HepG2 (cell line): ENCODE measurements at regions of chr1 and their contacts with region 1.

Region 1: GRCh38 chr1:27235827-27236226 is 1.4 kb downstream of the WDTC1 start:
- DNase-seq: no peak
- ATAC-seq: no peak
- H3K4me3 ChIP-seq: peak overlapping the region; percentile 51 to 85 (median 77)
- H3K27ac ChIP-seq: no peak overlapping the region
- H3K4me1 ChIP-seq: peaks cover 20% of the 10 kb centered on the region
- H3K27me3 ChIP-seq: no peaks in the 10 kb centered on the region
- CTCF ChIP-seq: no peak
- EP300 ChIP-seq: no peak
- POLR2A ChIP-seq: no peak
- RAD21 ChIP-seq: no peak

Region 2: DNA sequence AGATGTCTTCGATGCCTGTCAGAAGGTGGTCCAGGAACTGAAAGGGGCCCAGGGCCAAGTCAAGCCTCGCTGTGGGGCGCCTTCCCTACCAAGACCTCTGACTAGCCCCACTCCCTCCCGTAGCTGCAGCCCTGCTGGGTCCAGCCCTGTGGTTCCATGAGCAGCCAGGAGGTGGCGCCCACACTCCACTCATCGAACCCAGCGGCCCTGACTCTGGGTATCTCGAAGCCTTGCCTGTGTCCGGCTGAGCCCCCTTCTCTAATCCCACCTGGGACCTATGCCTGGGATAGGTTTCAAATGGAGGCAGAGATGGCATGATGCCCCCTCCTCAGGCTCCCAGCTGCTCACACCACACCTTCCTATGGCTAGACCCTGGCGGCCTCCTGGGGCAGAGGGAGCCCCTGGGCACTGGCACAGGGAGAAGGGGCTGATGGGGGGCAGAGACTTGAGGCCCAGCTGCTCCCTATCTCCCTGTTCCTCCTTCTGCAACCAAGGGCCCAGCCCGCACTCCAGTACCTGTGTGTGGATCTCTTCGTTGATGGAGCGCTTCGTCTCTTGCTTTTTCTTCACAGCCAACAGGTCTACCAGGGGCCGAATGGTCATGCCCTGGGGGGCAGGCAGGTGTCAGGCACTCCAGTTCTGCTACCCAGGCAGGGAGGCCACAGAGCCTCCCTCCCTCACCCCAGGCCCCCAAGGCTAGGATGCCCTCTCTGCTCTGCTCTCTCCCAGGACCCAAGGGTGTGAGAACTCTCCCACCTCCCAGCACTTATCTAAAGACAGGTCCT is 132.9 kb before region 1 on chr1:
- CTCF ChIA-PET with region 1: no interaction called
- POLR2A ChIA-PET with region 1: no interaction called
- in situ Hi-C with region 1: no loop called
- intact Hi-C with region 1: loop called (anchors 1 kb)
- DNase-seq: peak; percentile 39
- ATAC-seq: peak; percentile 76
- H3K4me3 ChIP-seq: no peak overlapping the region
- H3K27ac ChIP-seq: no peak overlapping the region
- H3K4me1 ChIP-seq: peaks cover 25% of the 10 kb centered on the region
- H3K27me3 ChIP-seq: no peaks in the 10 kb centered on the region; a peak in 1 of 5 replicates
- CTCF ChIP-seq: peak; percentile 98
- EP300 ChIP-seq: no peak
- POLR2A ChIP-seq: no peak
- RAD21 ChIP-seq: peak; percentile 95

Region 3: DNA sequence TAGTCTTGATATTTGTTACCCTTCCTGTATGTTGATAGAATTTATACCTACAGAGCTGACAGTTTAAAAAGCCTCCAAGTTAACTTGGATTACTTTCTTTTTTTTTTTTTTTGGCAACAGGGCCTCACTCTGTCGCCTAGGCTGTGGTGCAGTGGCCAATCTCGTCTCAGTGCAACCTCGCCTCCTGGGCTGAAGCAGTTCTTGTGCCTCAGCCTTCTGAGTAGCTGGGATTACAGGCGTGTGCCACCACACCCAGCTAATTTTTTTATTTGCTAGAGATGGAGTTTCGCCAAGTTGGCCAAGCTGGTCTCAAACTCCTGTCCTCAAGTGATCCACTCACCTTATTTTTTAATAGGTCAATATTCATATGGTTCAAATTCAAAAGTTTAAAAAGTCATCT is 31.3 kb after region 1 on chr1:
- CTCF ChIA-PET with region 1: no interaction called
- POLR2A ChIA-PET with region 1: no interaction called
- in situ Hi-C with region 1: no loop called
- intact Hi-C with region 1: no loop called
- DNase-seq: no peak
- ATAC-seq: no peak
- H3K4me3 ChIP-seq: no peak overlapping the region
- H3K27ac ChIP-seq: no peak overlapping the region
- H3K4me1 ChIP-seq: no peaks in the 10 kb centered on the region
- H3K27me3 ChIP-seq: no peaks in the 10 kb centered on the region
- CTCF ChIP-seq: no peak
- EP300 ChIP-seq: no peak
- POLR2A ChIP-seq: no peak
- RAD21 ChIP-seq: no peak

Region 4: GRCh38 chr1:27473755-27474154 is 237.9 kb after region 1 on chr1:
- CTCF ChIA-PET with region 1: no interaction called
- POLR2A ChIA-PET with region 1: no interaction called
- in situ Hi-C with region 1: no loop called
- intact Hi-C with region 1: no loop called
- DNase-seq: no peak
- ATAC-seq: no peak
- H3K4me3 ChIP-seq: no peak overlapping the region
- H3K27ac ChIP-seq: no peak overlapping the region
- H3K4me1 ChIP-seq: peaks cover 29% of the 10 kb centered on the region
- H3K27me3 ChIP-seq: no peaks in the 10 kb centered on the region
- CTCF ChIP-seq: no peak
- EP300 ChIP-seq: no peak
- POLR2A ChIP-seq: no peak
- RAD21 ChIP-seq: no peak